K562 (cell line): ENCODE measurements at regions of chr2 and their contacts with region 1.

Region 1: GRCh38 chr2:229800997-229801754 is 86.8 kb upstream of the DNER start:
- DNase-seq: peak; percentile 35 to 64 (median 46)
- ATAC-seq: peak; percentile 77
- H3K4me3 ChIP-seq: no peak overlapping the region
- H3K27ac ChIP-seq: no peak overlapping the region
- H3K4me1 ChIP-seq: no peaks in the 10 kb centered on the region
- H3K27me3 ChIP-seq: no peaks in the 10 kb centered on the region
- CTCF ChIP-seq: peak; percentile 47 to 63 (median 49)
- EP300 ChIP-seq: no peak
- POLR2A ChIP-seq: no peak
- RAD21 ChIP-seq: peak; percentile 33 to 40; a peak in 2 of 4 replicates

Region 2: DNA sequence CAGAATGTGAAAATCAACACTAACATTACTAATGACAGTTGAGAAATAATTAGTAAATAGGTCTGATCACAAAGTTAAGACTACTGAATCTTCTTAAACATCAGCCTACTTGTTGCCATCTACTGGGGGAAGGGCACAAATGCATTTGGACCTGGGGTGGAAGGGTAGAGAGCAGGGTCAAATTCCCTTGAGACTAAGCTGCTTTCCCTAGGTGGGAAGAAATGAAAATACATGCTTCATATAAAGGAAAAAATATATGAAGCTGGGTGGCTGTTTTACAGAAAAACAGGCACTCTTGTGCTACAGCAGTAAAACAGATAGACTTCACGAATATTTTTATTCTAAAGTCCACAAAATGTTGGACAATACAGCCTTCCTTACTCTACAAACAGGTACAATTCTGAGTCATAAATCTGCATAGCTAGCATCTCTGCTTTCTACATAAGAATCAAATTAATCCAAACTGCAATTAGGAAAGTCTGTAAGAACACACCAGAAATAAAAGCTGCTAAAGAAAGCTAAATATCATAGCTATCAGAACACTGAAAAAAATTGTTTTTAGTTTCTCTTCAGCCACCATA is 109.7 kb after region 1 on chr2:
- CTCF ChIA-PET with region 1: no interaction called
- POLR2A ChIA-PET with region 1: no interaction called
- in situ Hi-C with region 1: no loop called
- intact Hi-C with region 1: loop called (anchors 2 kb)
- DNase-seq: peak in 3 of 4 experiments; percentile 11 to 38 (median 27)
- ATAC-seq: peak; percentile 88
- H3K4me3 ChIP-seq: no peak overlapping the region
- H3K27ac ChIP-seq: no peak overlapping the region
- H3K4me1 ChIP-seq: peaks cover 0 to 2% of the 10 kb centered on the region in 2 experiments; a peak in 3 of 5 replicates
- H3K27me3 ChIP-seq: no peaks in the 10 kb centered on the region
- CTCF ChIP-seq: peak in 2 of 3 experiments; percentile 35 to 38; a peak in 3 of 6 replicates
- EP300 ChIP-seq: no peak
- POLR2A ChIP-seq: no peak
- RAD21 ChIP-seq: peak in 1 of 2 experiments; percentile 32; a peak in 2 of 4 replicates